ENCODE measurements at regions of chr11 and their contacts with region 1.

Region 1: GRCh38 chr11:102109896-102110760 is at the start of gene YAP1:
- DNase-seq: peak; percentile 58 to 69 (median 61)
- H3K4me3 ChIP-seq: peak within 1 kb of the TSS in 1 of 2 donors; percentile 55
- H3K4me3 Mint-ChIP-seq: peak within 1 kb of the TSS; percentile 92 to 97 (median 94)
- H3K27ac ChIP-seq: no peak within 1 kb of the TSS
- H3K27ac Mint-ChIP-seq: peak within 1 kb of the TSS in 6 of 7 donors; percentile 23 to 82 (median 75)
- H3K4me1 ChIP-seq: peaks cover 12% of the 10 kb centered on the region
- H3K4me1 Mint-ChIP-seq: peaks cover 5 to 12% (median 8%) of the 10 kb centered on the region in 4 donors
- H3K27me3 ChIP-seq: peaks cover 11% of the 10 kb centered on the region
- H3K27me3 Mint-ChIP-seq: peaks cover 24 to 30% of the 10 kb centered on the region in 2 donors
- total RNA-seq, gene YAP1: 0.44 to 0.75 TPM

Region 2: DNA sequence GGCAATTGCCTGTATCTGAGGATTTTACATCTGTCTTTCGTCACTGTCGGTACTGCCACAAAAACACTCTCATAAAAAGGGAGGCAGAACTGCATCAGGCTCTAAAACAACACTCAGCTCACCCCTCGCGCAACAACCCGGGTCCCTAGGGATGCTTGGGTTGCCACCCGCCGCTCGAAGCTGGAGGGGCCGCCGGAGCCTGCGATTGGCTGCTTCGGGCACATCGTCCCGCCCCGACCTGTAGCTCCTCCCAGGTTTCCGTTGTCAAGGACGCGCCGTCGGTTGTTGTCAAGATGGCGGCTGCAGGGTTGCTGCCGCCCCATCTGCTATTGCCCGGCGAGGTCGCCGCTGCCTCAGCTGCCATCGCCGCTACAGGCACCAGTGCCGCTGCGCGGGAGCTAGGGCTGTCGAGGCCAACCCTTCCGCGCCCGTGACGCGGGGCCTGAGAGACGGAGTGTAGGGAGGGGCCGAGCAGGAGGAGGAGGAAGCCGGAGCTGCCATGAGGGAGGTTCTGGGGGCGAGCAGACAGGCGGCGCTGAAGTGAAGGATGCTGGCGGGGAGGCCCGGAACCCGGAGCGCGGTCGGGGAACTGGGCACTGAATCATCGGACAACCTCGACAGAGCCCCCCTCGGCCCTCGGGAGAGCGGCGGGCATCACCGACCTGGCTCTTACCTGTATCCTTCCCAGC is 195.2 kb before region 1 on chr11 and contains the start of gene CEP126:
- CTCF ChIA-PET with region 1: no interaction called
- POLR2A ChIA-PET with region 1: no interaction called
- intact Hi-C with region 1: loop called (anchors 2 kb)
- DNase-seq: peak; percentile 91 to 94 (median 93)
- H3K4me3 ChIP-seq: peak within 1 kb of the TSS; percentile 43 to 64
- H3K4me3 Mint-ChIP-seq: peak within 1 kb of the TSS; percentile 88 to 96 (median 94)
- H3K27ac ChIP-seq: peak within 1 kb of the TSS; percentile 60
- H3K27ac Mint-ChIP-seq: peak within 1 kb of the TSS; percentile 89 to 94 (median 92)
- H3K4me1 ChIP-seq: peaks cover 18% of the 10 kb centered on the region
- H3K4me1 Mint-ChIP-seq: peaks cover 18 to 25% (median 22%) of the 10 kb centered on the region in 4 donors
- H3K27me3 ChIP-seq: no peaks in the 10 kb centered on the region
- H3K27me3 Mint-ChIP-seq: peaks cover 0 to 5% of the 10 kb centered on the region in 2 donors
- total RNA-seq, gene CEP126: 2.4 to 2.6 TPM

Region 3: GRCh38 chr11:101963236-101963635 is 146.9 kb before region 1 on chr11:
- CTCF ChIA-PET with region 1: no interaction called
- POLR2A ChIA-PET with region 1: no interaction called
- intact Hi-C with region 1: no loop called
- DNase-seq: no peak
- H3K4me3 ChIP-seq: no peak overlapping the region
- H3K4me3 Mint-ChIP-seq: no peak overlapping the region
- H3K27ac ChIP-seq: no peak overlapping the region
- H3K27ac Mint-ChIP-seq: no peak overlapping the region
- H3K4me1 ChIP-seq: no peaks in the 10 kb centered on the region
- H3K4me1 Mint-ChIP-seq: no peaks in the 10 kb centered on the region
- H3K27me3 ChIP-seq: no peaks in the 10 kb centered on the region
- H3K27me3 Mint-ChIP-seq: no peaks in the 10 kb centered on the region

Region 4: DNA sequence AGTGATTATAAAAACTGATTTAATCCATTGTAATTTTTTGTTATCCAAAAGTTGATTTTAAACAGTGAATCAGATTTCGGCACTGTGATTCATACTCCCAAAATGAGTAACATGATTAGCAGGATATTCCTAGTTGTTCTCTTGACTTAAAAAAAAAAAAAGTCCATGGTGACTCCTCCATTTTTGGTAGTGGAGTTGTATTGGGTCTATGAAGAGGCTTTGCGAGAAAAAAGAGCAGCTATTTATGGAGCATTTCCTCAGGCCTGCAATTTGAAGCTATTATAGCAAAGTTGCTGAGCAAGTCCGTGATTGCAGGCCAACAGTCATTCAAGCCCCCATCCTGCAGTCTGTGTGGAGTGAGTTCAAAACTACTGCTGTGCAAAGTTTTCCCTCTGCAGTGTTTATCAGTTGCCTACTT is 29.0 kb after region 1 on chr11:
- CTCF ChIA-PET with region 1: no interaction called
- POLR2A ChIA-PET with region 1: no interaction called
- intact Hi-C with region 1: no loop called
- DNase-seq: no peak
- H3K4me3 ChIP-seq: no peak overlapping the region
- H3K4me3 Mint-ChIP-seq: no peak overlapping the region
- H3K27ac ChIP-seq: no peak overlapping the region
- H3K27ac Mint-ChIP-seq: no peak overlapping the region
- H3K4me1 ChIP-seq: no peaks in the 10 kb centered on the region
- H3K4me1 Mint-ChIP-seq: no peaks in the 10 kb centered on the region
- H3K27me3 ChIP-seq: no peaks in the 10 kb centered on the region
- H3K27me3 Mint-ChIP-seq: peaks cover 4 to 15% of the 10 kb centered on the region in 2 donors